ENCODE measurements at regions of chr12 and their contacts with region 1.

Region 1: DNA sequence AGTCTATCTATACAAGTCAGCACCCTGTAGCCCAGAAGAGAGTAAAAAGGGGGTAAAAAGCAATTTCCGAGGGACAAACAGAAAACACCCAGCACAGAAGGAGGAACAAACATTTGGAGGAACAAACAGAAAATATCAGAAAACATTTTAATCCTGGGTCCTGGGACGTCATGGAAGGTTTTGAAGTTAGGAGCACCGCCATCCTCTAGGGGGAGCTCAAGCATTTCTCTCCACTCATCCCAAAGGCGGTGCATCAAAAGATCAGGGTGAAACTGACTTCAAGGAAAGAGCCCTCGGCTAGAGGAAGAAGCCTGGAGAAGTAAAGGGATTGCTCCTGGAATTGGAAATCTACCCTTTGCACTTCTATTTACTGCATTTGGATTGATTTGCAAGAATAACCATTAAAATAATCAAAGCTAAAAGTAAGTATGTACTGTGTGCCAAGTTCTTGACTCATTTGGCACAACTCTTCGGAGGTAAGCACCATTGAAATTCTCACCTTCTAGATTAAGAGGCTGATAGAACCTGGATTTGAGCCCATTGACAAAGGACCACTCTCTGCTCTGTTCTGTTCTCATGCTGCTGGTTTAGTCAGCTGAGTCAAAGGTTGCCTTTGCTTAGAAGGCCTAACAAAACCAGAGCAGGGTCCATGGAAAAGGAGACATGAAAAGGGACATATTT is 17.2 kb upstream of the POC1B start:
- DNase-seq: peak; percentile 75 to 86
- H3K4me3 ChIP-seq: no peak overlapping the region
- H3K4me3 Mint-ChIP-seq: no peak overlapping the region
- H3K27ac Mint-ChIP-seq: no peak overlapping the region
- H3K4me1 ChIP-seq: peaks cover 29% of the 10 kb centered on the region
- H3K4me1 Mint-ChIP-seq: peaks cover 17% of the 10 kb centered on the region
- H3K27me3 ChIP-seq: no peaks in the 10 kb centered on the region
- H3K27me3 Mint-ChIP-seq: no peaks in the 10 kb centered on the region
- CTCF ChIP-seq: peak; percentile 88 to 89

Region 2: DNA sequence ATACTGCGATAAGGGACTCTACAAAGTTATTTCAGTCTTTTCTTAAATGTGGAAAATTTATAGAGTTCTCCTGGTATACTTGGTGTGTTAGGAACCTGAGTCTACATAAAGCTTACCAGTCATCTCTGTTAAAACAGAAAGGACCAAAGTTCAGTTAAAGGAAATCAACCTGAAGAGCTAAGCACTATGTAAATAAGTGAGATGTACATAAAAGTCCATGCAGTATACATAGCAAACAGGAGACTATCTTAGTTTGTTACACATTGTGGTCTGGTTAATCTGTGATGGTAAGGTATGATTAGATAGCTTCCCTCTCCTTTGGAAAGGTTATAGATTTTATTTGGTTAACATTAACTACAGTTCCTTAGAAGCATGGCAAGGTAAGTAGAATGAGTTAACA is 89.7 kb after region 1 on chr12:
- CTCF ChIA-PET with region 1: no interaction called
- POLR2A ChIA-PET with region 1: no interaction called
- intact Hi-C with region 1: loop called (anchors 1 kb)
- DNase-seq: peak in 1 of 2 experiments; percentile 49
- H3K4me3 ChIP-seq: no peak overlapping the region
- H3K4me3 Mint-ChIP-seq: no peak overlapping the region
- H3K27ac Mint-ChIP-seq: no peak overlapping the region
- H3K4me1 ChIP-seq: peaks cover 33% of the 10 kb centered on the region
- H3K4me1 Mint-ChIP-seq: peaks cover 32% of the 10 kb centered on the region
- H3K27me3 ChIP-seq: no peaks in the 10 kb centered on the region
- H3K27me3 Mint-ChIP-seq: no peaks in the 10 kb centered on the region
- CTCF ChIP-seq: no peak

Region 3: DNA sequence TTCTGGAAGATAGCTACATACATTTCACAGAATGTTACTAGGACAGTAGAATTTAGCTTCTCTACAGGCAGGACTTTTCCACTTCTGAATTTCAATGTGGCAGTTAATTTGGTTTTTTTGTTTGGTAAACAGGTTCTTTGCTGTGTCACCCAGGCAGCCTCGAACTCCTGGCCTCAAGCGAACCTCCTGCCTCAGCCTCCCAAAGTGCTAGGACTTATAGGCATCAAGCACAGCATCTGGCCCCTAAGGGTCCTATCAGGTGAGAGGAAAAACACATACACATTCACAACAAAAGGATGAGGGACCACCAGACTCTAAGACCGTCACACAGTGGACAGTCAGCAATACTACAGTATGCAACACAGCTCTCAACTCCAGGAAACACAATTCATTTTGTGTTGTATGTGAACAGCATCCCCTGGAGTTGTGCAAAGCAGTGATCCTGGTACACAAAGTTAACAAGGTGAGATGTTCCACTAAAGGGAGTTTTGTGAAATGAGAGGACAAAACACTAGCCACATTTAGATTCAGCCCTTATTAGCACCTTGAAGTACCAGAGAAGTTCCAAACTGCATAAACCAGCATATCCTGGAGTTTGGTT is 158.7 kb after region 1 on chr12:
- CTCF ChIA-PET with region 1: no interaction called
- POLR2A ChIA-PET with region 1: no interaction called
- intact Hi-C with region 1: loop called (anchors 2 kb)
- DNase-seq: no peak
- H3K4me3 ChIP-seq: no peak overlapping the region
- H3K4me3 Mint-ChIP-seq: no peak overlapping the region
- H3K27ac Mint-ChIP-seq: no peak overlapping the region
- H3K4me1 ChIP-seq: peaks cover 48% of the 10 kb centered on the region
- H3K4me1 Mint-ChIP-seq: peaks cover 42% of the 10 kb centered on the region
- H3K27me3 ChIP-seq: no peaks in the 10 kb centered on the region
- H3K27me3 Mint-ChIP-seq: no peaks in the 10 kb centered on the region
- CTCF ChIP-seq: no peak

Region 4: DNA sequence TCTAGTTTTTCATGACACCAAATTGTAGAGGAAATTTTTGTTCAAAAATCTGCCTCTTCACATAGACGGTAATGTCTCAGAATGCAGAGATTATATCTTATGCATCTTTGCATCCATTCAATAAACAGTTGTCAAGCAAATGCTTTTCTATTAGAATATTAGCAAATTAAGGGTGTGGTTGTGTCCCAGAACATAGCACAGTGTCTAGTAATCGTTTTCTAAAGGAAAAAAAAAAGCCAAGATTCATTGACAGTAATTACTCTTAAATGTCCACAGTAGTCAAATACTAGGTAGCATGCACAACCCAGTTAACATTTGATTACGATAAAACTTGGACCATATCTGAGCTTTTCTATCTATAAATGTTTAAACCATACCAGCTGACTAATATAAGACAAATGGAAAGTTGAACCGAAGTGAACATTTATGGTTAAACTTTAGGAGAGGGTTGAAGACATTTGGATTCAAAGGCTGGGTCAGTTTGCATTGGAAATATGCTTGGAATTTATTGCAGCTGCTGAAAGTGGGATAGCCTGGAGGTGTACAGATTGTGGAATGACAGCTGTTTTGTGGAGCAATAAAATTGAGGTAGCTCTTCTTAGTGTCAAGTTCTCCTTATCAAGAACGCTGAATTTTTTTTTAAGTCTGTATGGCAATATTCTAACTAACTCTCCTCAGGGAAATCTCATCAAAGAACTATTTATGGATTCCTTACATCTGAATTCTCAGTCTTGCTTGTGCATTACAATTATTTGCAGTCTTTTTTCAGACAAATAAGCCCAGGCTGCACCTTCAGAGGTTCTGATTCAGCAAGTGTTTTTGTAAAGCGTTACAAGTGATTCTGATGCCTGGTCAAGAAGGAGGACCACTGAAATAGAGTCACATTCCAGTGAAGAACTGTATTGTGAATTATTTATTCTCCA is 232.3 kb after region 1 on chr12:
- CTCF ChIA-PET with region 1: interaction called, 3 read pairs
- POLR2A ChIA-PET with region 1: no interaction called
- intact Hi-C with region 1: loop called (anchors 10 kb)
- DNase-seq: peak; percentile 74 to 77
- H3K4me3 ChIP-seq: no peak overlapping the region
- H3K4me3 Mint-ChIP-seq: peak overlapping the region; percentile 41
- H3K27ac Mint-ChIP-seq: peak overlapping the region; percentile 72
- H3K4me1 ChIP-seq: peaks cover 47% of the 10 kb centered on the region
- H3K4me1 Mint-ChIP-seq: peaks cover 41% of the 10 kb centered on the region
- H3K27me3 ChIP-seq: no peaks in the 10 kb centered on the region
- H3K27me3 Mint-ChIP-seq: no peaks in the 10 kb centered on the region
- CTCF ChIP-seq: no peak

Region 5: GRCh38 chr12:89960011-89960507 is 417.0 kb after region 1 on chr12:
- CTCF ChIA-PET with region 1: no interaction called
- POLR2A ChIA-PET with region 1: no interaction called
- intact Hi-C with region 1: loop called (anchors 2 kb)
- DNase-seq: no peak
- H3K4me3 ChIP-seq: no peak overlapping the region
- H3K4me3 Mint-ChIP-seq: no peak overlapping the region
- H3K27ac Mint-ChIP-seq: no peak overlapping the region
- H3K4me1 ChIP-seq: no peaks in the 10 kb centered on the region
- H3K4me1 Mint-ChIP-seq: peaks cover 6% of the 10 kb centered on the region
- H3K27me3 ChIP-seq: no peaks in the 10 kb centered on the region
- H3K27me3 Mint-ChIP-seq: no peaks in the 10 kb centered on the region
- CTCF ChIP-seq: no peak

Region 6: DNA sequence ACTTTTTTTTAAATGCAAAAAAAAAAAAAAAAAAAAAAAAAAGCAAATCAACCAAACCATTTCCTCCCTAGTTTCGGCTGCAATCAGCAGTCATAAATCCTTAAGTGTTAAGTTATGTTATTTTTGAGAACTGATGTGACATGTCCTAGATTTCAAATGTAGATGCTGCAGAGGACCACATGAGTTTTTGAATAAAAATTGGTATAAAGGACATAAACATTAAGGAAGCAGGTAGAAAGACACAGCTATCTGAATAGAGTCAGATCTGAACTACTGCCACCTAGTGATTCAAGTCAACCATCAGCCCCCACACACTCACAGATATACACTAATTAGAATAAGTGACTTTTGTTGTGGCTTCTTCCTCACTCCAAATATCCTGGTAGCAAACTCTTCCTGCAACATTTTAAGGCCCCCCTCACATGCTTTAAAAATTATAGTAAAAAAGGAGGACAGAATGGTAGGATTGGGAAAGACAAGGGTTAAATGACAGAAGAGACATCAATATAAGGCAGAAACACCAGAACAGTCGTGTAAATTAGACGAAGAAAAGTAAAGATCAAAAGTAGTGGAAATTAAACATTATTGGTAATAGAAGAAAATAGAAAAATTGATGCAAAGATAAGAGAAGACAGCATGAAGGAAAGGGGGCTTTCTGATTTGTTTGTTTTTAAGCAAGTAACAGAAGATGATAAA is 560.1 kb after region 1 on chr12:
- CTCF ChIA-PET with region 1: interaction called, 3 read pairs
- POLR2A ChIA-PET with region 1: no interaction called
- intact Hi-C with region 1: loop called (anchors 2 kb)
- DNase-seq: peak in 1 of 2 experiments; percentile 32
- H3K4me3 ChIP-seq: no peak overlapping the region
- H3K4me3 Mint-ChIP-seq: no peak overlapping the region
- H3K27ac Mint-ChIP-seq: no peak overlapping the region
- H3K4me1 ChIP-seq: no peaks in the 10 kb centered on the region
- H3K4me1 Mint-ChIP-seq: peaks cover 20% of the 10 kb centered on the region
- H3K27me3 ChIP-seq: no peaks in the 10 kb centered on the region
- H3K27me3 Mint-ChIP-seq: no peaks in the 10 kb centered on the region
- CTCF ChIP-seq: peak; percentile 28 to 49

Region 7: DNA sequence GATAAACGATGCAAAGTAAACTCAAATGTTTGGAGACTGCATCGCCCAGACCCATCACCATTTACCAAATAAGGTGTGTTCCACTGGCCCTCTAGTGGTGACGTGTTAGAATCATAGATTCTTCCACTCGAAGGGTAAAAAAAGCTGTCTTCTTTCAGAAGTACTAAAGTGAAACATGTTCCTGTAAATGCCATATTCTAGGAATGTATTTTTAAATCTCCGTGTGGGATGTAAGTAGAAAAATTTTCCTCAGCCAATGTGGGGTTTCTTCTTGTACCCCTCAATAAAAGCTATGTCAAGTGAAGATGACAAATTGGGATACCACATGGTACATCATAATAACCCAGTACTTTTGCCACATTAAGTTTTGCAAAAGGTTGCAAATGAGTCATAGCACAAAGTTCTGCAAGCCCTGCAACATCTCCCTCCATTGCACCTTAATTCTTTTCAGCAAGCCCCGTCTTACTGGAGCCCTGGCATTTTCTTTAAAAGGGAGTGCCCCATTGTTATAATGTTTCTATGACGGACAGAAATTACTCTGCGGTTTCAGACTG is 1311.2 kb after region 1 on chr12:
- CTCF ChIA-PET with region 1: no interaction called
- POLR2A ChIA-PET with region 1: no interaction called
- intact Hi-C with region 1: loop called (anchors 10 kb)
- DNase-seq: peak; percentile 46 to 50
- H3K4me3 ChIP-seq: no peak overlapping the region
- H3K4me3 Mint-ChIP-seq: no peak overlapping the region
- H3K27ac Mint-ChIP-seq: no peak overlapping the region
- H3K4me1 ChIP-seq: no peaks in the 10 kb centered on the region
- H3K4me1 Mint-ChIP-seq: no peaks in the 10 kb centered on the region
- H3K27me3 ChIP-seq: no peaks in the 10 kb centered on the region
- H3K27me3 Mint-ChIP-seq: no peaks in the 10 kb centered on the region
- CTCF ChIP-seq: peak; percentile 68 to 84

Measured in Caco-2 (cell line).